Heart right ventricle (tissue), 16 donors: ENCODE measurements at regions of chr17 and their contacts with region 1.

Region 1: GRCh38 chr17:74864866-74865395 is 5.2 kb upstream of the GRIN2C start:
- DNase-seq: peak; percentile 71 to 79
- ATAC-seq: peak; percentile 18 to 78 (median 64)
- H3K4me3 ChIP-seq: no peak overlapping the region
- H3K27ac ChIP-seq: no peak overlapping the region
- H3K4me1 ChIP-seq: peaks cover 9 to 33% (median 23%) of the 10 kb centered on the region in 9 donors
- H3K27me3 ChIP-seq: peaks cover 13 to 28% (median 23%) of the 10 kb centered on the region in 7 donors
- CTCF ChIP-seq: peak; percentile 87 to 98 (median 96)

Region 2: DNA sequence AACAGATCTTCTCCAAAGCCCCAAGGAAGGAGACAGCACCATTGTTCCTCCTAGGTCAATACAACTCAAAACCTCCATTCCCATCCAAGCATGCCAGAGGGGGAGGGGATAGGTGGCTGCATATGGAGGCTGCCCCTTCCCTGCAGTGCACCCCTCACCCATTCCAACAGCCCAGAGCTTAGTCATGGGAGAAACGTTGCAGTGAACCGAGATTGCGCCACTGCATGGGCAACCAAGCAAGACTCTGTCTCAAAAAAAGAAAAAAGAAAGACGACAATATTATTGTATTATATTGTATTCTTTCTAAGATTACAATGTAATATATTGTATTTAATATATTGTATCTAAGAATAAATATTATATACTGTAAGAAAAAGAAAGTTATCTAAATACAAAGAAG is 205.0 kb before region 1 on chr17:
- intact Hi-C with region 1: loop called in 5 of 10 experiments (anchors 10 kb)
- DNase-seq: no peak
- ATAC-seq: no peak
- H3K4me3 ChIP-seq: no peak overlapping the region
- H3K27ac ChIP-seq: no peak overlapping the region
- H3K4me1 ChIP-seq: peaks cover 0 to 4% (median 0%) of the 10 kb centered on the region in 9 donors
- H3K27me3 ChIP-seq: peaks cover 5 to 85% (median 49%) of the 10 kb centered on the region in 7 donors
- CTCF ChIP-seq: no peak

Region 3: DNA sequence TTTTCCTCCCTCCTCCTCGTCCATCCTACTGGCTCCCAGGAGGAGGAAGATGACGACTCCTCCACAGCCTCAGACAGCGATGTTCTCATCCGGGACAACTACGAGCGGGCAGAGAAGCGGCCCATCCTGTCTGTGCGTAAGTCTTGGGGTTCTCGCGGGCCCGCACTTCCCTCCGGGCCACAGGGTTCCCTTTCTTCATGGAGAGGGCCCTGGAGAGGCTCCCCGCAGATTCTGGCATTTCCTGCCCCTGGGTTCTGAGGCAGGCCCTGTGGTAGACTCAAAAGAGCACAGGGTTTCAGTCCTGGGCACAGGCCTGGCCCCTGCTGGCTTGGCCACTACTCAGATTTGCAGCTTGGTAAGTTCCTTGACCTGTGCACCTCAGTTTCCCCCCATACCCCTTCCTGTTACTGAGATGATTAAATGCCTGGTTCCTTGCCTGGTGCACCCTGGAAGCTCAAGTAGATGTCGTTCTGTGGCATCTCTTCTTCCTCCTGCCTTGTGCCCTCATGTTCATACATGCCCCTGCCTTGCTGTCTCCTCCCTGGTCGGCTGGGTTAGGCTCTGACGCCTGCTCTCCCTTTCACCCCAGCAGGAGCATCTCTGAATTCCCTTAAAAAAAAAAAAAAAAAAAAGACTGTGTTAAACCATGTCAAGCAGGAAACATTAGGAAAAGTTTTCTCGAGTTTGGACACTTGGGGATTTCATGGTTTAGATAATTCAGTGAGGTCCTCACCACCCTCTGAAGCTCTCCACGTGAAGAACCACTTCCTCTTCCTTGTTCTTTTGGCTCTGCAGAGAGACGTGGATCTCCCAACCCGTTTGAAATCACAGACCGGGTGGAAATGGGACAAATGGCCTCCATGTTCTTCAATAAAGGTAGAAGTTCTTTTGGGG is 74.5 kb before region 1 on chr17:
- intact Hi-C with region 1: loop called (anchors 1 to 5 kb)
- DNase-seq: no peak
- ATAC-seq: peak in 2 of 8 donors; percentile 31
- H3K4me3 ChIP-seq: no peak overlapping the region
- H3K27ac ChIP-seq: peak overlapping the region in 1 of 10 donors; percentile 61
- H3K4me1 ChIP-seq: peaks cover 0 to 29% (median 0%) of the 10 kb centered on the region in 9 donors
- H3K27me3 ChIP-seq: no peaks in the 10 kb centered on the region
- CTCF ChIP-seq: no peak